ENCODE measurements at regions of chr18 and their contacts with region 1.

Region 1: GRCh38 chr18:3447895-3448837 is 1.8 kb upstream of the TGIF1 start:
- DNase-seq: peak; percentile 94
- ATAC-seq: peak; percentile 47
- H3K4me3 ChIP-seq: peak overlapping the region; percentile 75 to 98 (median 92)
- H3K4me3 Mint-ChIP-seq: peak overlapping the region; percentile 99
- H3K27ac ChIP-seq: peak overlapping the region; percentile 99 to 100
- H3K27ac Mint-ChIP-seq: peak overlapping the region; percentile 96
- H3K4me1 ChIP-seq: peaks cover 9 to 42% of the 10 kb centered on the region in 2 donors
- H3K4me1 Mint-ChIP-seq: peaks cover 20% of the 10 kb centered on the region
- H3K27me3 ChIP-seq: no peaks in the 10 kb centered on the region
- H3K27me3 Mint-ChIP-seq: no peaks in the 10 kb centered on the region
- CTCF ChIP-seq: no peak

Region 2: GRCh38 chr18:3177902-3178687 is 270.1 kb before region 1 on chr18:
- CTCF ChIA-PET with region 1: no interaction called
- POLR2A ChIA-PET with region 1: no interaction called
- intact Hi-C with region 1: loop called (anchors 2 kb)
- DNase-seq: peak; percentile 95
- ATAC-seq: peak; percentile 84
- H3K4me3 ChIP-seq: peak overlapping the region in 3 of 5 experiments; percentile 37 to 59 (median 44)
- H3K4me3 Mint-ChIP-seq: peak overlapping the region; percentile 77
- H3K27ac ChIP-seq: peak overlapping the region; percentile 53 to 78
- H3K27ac Mint-ChIP-seq: peak overlapping the region; percentile 97
- H3K4me1 ChIP-seq: peaks cover 20 to 27% of the 10 kb centered on the region in 2 donors
- H3K4me1 Mint-ChIP-seq: peaks cover 28% of the 10 kb centered on the region
- H3K27me3 ChIP-seq: no peaks in the 10 kb centered on the region
- H3K27me3 Mint-ChIP-seq: no peaks in the 10 kb centered on the region
- CTCF ChIP-seq: no peak

Region 3: GRCh38 chr18:3297025-3297984 is 150.9 kb before region 1 on chr18:
- CTCF ChIA-PET with region 1: interaction called, 22 read pairs
- POLR2A ChIA-PET with region 1: interaction called, 9 read pairs
- intact Hi-C with region 1: loop called (anchors 1 kb)
- DNase-seq: peak; percentile 90
- ATAC-seq: peak; percentile 99
- H3K4me3 ChIP-seq: peak overlapping the region; percentile 53 to 88 (median 85)
- H3K4me3 Mint-ChIP-seq: peak overlapping the region; percentile 96
- H3K27ac ChIP-seq: no peak overlapping the region
- H3K27ac Mint-ChIP-seq: peak overlapping the region; percentile 80
- H3K4me1 ChIP-seq: peaks cover 7 to 10% of the 10 kb centered on the region in 2 donors
- H3K4me1 Mint-ChIP-seq: peaks cover 13% of the 10 kb centered on the region
- H3K27me3 ChIP-seq: peaks cover 0 to 7% (median 2%) of the 10 kb centered on the region in 4 experiments
- H3K27me3 Mint-ChIP-seq: peaks cover 30% of the 10 kb centered on the region
- CTCF ChIP-seq: peak; percentile 89

Region 4: GRCh38 chr18:3402982-3403451 is 45.1 kb before region 1 on chr18:
- CTCF ChIA-PET with region 1: interaction called, 5 read pairs
- POLR2A ChIA-PET with region 1: interaction called, 4 read pairs
- intact Hi-C with region 1: loop called (anchors 2 kb)
- DNase-seq: peak; percentile 47
- ATAC-seq: peak; percentile 16
- H3K4me3 ChIP-seq: no peak overlapping the region
- H3K4me3 Mint-ChIP-seq: peak overlapping the region; percentile 60
- H3K27ac ChIP-seq: peak overlapping the region; percentile 54
- H3K27ac Mint-ChIP-seq: peak overlapping the region; percentile 74
- H3K4me1 ChIP-seq: peaks cover 52 to 54% of the 10 kb centered on the region in 2 donors
- H3K4me1 Mint-ChIP-seq: peaks cover 60% of the 10 kb centered on the region
- H3K27me3 ChIP-seq: no peaks in the 10 kb centered on the region
- H3K27me3 Mint-ChIP-seq: no peaks in the 10 kb centered on the region
- CTCF ChIP-seq: no peak

Region 5: DNA sequence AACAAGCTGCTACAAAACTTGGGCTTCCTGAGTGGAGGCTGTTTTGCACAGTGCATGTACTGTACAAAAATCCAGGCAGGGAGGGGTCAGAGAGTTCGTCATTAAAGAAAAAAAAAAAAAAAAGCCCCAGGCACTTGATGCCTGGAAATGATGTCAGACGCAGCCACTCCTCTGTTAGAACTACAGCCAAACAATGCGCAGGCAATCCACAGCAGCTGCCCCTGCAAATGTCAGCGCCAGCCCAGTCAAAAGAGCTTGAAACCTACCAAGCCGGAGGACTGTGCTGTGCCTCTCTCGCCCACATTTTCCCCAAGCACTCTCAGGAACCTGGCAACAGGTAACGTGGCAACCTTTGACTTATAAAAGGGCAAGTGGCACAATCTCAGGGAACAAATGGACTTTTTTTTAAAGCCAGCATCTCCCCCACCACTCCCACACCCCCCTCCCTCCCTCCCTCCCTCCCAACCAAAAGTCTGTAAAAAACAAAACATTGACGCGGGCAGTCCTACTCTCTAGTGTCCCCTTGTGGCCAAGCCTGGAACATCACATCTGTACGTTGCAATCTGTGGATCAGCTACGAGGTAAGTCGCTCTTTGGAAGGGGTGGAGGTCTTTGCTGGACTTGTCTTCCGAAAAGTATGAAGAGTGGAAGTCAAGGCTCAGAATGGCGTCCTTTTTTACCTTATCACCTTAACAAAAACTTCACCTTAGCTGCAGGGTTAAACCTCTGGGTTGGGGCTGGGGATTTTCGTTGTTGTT is 145.9 kb after region 1 on chr18:
- CTCF ChIA-PET with region 1: interaction called, 92 read pairs
- POLR2A ChIA-PET with region 1: interaction called, 73 read pairs
- intact Hi-C with region 1: loop called (anchors 1 kb)
- DNase-seq: peak; percentile 96
- ATAC-seq: peak; percentile 80
- H3K4me3 ChIP-seq: peak overlapping the region; percentile 43 to 80 (median 64)
- H3K4me3 Mint-ChIP-seq: peak overlapping the region; percentile 91
- H3K27ac ChIP-seq: peak overlapping the region; percentile 88 to 96
- H3K27ac Mint-ChIP-seq: peak overlapping the region; percentile 98
- H3K4me1 ChIP-seq: peaks cover 43 to 49% of the 10 kb centered on the region in 2 donors
- H3K4me1 Mint-ChIP-seq: peaks cover 53% of the 10 kb centered on the region
- H3K27me3 ChIP-seq: no peaks in the 10 kb centered on the region
- H3K27me3 Mint-ChIP-seq: no peaks in the 10 kb centered on the region
- CTCF ChIP-seq: peak; percentile 84

Measured in B cell (primary cell).